ENCODE measurements at regions of chr4 and their contacts with region 1.

Region 1: DNA sequence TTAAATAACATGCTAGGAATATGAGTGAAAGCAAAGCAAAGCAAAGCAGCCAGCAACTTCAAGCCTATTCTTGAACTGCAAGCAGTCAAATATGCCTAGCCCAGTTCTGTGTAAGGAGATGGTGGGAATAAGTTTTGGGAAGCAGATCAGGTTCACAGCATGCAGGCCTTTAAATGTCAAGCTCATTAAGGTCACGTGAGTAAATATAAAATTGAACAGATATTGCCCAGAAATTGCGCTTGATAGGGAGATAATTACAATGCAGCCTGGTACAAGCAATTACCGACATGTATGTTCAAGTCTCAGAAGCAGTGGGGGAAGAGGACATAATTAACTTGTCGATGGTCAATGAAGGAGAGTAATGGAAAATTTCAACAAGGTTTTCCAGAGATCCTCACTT is 6.0 kb downstream of the GNPDA2 start:
- DNase-seq: no peak
- ATAC-seq: no peak
- H3K4me3 ChIP-seq: no peak overlapping the region
- H3K27ac ChIP-seq: no peak overlapping the region
- H3K4me1 ChIP-seq: peaks cover 6% of the 10 kb centered on the region
- H3K27me3 ChIP-seq: no peaks in the 10 kb centered on the region
- CTCF ChIP-seq: no peak

Region 2: DNA sequence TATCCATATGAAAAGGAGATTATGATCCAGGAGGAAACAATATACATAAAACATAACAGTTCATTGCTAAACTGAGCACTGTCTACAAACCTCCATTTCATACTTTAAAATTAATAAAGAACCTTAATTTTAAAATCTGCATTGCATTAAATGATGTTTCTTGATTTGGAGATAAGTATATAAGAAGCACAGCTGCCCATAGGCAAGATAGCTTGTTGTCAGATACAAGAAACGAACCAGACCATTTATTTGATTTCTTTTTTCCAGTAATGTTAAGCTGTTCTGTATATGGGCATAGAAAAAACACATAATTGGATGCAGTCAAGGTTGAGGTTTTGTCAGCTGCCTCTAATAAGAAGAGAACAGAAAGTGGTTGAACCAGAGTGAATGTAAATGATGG is 35.7 kb before region 1 on chr4:
- CTCF ChIA-PET with region 1: no interaction called
- POLR2A ChIA-PET with region 1: no interaction called
- intact Hi-C with region 1: no loop called
- DNase-seq: no peak
- ATAC-seq: no peak
- H3K4me3 ChIP-seq: no peak overlapping the region
- H3K27ac ChIP-seq: no peak overlapping the region
- H3K4me1 ChIP-seq: peaks cover 9% of the 10 kb centered on the region
- H3K27me3 ChIP-seq: no peaks in the 10 kb centered on the region
- CTCF ChIP-seq: no peak

Region 3: GRCh38 chr4:44704677-44705076 is 15.7 kb before region 1 on chr4:
- CTCF ChIA-PET with region 1: no interaction called
- POLR2A ChIA-PET with region 1: interaction called, 10 read pairs
- intact Hi-C with region 1: no loop called
- DNase-seq: no peak
- ATAC-seq: no peak
- H3K4me3 ChIP-seq: no peak overlapping the region
- H3K27ac ChIP-seq: no peak overlapping the region
- H3K4me1 ChIP-seq: no peaks in the 10 kb centered on the region
- H3K27me3 ChIP-seq: no peaks in the 10 kb centered on the region
- CTCF ChIP-seq: no peak

Measured in PC-3 (cell line).